Motor neuron (in vitro differentiated cells): ENCODE measurements at regions of chr7 and their contacts with region 1.

Region 1: GRCh38 chr7:146090023-146090645 is 26.5 kb upstream of the CNTNAP2 start:
- ATAC-seq: peak in 4 of 8 experiments; percentile 22 to 53 (median 43)
- H3K4me3 ChIP-seq: no peak overlapping the region
- H3K27ac ChIP-seq: no peak overlapping the region
- H3K4me1 ChIP-seq: no peaks in the 10 kb centered on the region

Region 2: GRCh38 chr7:144854839-144855424 is 1235.2 kb before region 1 on chr7:
- in situ Hi-C with region 1: loop called in 1 of 9 experiments (anchors 25 kb)
- ATAC-seq: peak in 2 of 8 experiments; percentile 15 to 67
- H3K4me3 ChIP-seq: no peak overlapping the region
- H3K27ac ChIP-seq: no peak overlapping the region
- H3K4me1 ChIP-seq: no peaks in the 10 kb centered on the region

Region 3: DNA sequence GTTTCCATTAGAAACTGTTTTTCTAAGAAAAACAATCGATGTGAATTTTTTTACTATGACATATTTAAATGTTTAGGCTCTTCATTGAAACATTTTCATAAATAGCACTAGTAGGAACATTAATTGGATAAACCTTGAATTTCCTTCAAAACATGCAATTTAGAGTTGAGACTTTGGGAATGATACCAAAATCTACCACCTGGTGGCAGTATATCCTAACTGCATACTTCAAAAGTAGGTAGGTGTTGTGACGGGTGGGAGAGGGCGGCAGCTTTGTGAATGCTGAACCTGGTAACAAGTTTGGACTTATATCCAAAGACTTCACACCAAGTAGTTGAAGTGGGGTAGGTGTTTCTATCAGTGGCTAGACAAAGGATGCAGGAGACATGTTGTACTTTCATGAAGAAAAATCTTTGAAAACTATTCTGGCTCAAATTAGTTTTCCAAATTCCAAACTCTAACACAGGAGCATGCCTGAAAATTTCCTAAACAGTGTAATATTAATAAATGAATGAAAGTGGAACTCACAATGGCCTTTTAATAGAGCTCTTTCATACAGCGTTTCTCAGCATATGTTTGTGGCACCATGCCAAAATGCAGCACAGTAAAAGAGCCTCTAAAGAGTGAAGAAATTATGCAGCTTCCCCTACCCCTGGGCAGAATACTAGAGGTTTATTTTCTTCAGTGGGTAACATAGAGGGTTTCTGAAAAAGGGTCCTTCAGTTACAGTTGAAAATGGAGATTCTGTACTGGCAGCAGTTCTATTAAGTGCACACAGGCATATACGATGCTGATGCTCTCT is 1053.3 kb before region 1 on chr7:
- in situ Hi-C with region 1: loop called in 2 of 9 experiments (anchors 25 kb)
- ATAC-seq: peak in 5 of 8 experiments; percentile 32 to 74 (median 42)
- H3K4me3 ChIP-seq: no peak overlapping the region
- H3K27ac ChIP-seq: no peak overlapping the region
- H3K4me1 ChIP-seq: no peaks in the 10 kb centered on the region

Region 4: GRCh38 chr7:145050415-145050814 is 1039.7 kb before region 1 on chr7:
- in situ Hi-C with region 1: loop called in 3 of 9 experiments (anchors 25 kb)
- ATAC-seq: no peak
- H3K4me3 ChIP-seq: no peak overlapping the region
- H3K27ac ChIP-seq: no peak overlapping the region
- H3K4me1 ChIP-seq: no peaks in the 10 kb centered on the region

Region 5: GRCh38 chr7:146185844-146186243 is 95.7 kb after region 1 on chr7:
- in situ Hi-C with region 1: no loop called
- ATAC-seq: no peak
- H3K4me3 ChIP-seq: no peak overlapping the region
- H3K27ac ChIP-seq: no peak overlapping the region
- H3K4me1 ChIP-seq: no peaks in the 10 kb centered on the region